ENCODE measurements at regions of chr7 and their contacts with region 1.

Region 1: DNA sequence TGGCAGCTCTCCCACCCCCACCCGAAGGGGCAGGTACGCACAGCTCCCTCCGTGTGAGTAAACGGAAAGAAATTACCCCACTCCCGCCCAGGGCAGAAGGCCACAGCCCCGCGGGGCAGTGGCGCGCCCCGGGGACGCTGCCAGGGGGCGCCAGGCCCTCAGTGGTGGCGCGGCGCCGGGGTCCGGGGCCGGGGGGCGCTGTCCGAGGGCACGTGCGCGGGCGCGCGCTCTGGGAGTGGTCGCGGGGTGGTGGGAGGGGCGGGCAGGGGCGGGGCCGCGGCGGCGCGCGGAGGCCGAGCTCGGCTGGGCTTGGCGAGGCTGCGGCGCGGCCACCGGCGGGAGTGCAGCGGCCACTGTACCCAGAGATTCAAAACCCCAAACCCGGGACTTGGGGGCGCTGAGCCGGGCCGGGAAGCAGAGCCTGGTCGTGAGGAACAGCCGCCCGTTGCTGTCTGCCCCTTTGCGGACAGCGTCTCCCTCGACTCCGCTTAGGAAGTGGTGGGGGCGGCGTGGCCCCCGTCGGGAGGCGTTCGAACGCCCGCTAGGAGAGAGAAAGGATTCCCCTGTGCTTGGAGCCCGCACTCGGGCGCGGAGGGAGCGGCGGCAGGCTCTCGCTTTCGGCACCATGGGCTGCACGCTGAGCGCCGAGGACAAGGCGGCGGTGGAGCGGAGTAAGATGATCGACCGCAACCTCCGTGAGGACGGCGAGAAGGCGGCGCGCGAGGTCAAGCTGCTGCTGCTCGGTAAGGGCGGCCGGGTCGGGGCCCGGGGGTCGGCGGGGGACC is at the start of gene GNAI1:
- DNase-seq: peak; percentile 68
- ATAC-seq: peak; percentile 91
- total RNA-seq, gene GNAI1: 16.0 to 18.4 TPM

Region 2: GRCh38 chr7:80053124-80053523 is 81.6 kb before region 1 on chr7:
- intact Hi-C with region 1: no loop called
- DNase-seq: no peak
- ATAC-seq: no peak

Region 3: GRCh38 chr7:80186721-80187120 is 52.0 kb after region 1 on chr7:
- intact Hi-C with region 1: no loop called
- DNase-seq: no peak
- ATAC-seq: no peak

Region 4: GRCh38 chr7:80288175-80289122 is 153.7 kb after region 1 on chr7:
- intact Hi-C with region 1: loop called in 1 of 2 experiments (anchors 10 kb)
- DNase-seq: no peak
- ATAC-seq: no peak